CD4-positive, alpha-beta memory T cell (primary cell): ENCODE measurements at regions of chr13 and their contacts with region 1.

Region 1: DNA sequence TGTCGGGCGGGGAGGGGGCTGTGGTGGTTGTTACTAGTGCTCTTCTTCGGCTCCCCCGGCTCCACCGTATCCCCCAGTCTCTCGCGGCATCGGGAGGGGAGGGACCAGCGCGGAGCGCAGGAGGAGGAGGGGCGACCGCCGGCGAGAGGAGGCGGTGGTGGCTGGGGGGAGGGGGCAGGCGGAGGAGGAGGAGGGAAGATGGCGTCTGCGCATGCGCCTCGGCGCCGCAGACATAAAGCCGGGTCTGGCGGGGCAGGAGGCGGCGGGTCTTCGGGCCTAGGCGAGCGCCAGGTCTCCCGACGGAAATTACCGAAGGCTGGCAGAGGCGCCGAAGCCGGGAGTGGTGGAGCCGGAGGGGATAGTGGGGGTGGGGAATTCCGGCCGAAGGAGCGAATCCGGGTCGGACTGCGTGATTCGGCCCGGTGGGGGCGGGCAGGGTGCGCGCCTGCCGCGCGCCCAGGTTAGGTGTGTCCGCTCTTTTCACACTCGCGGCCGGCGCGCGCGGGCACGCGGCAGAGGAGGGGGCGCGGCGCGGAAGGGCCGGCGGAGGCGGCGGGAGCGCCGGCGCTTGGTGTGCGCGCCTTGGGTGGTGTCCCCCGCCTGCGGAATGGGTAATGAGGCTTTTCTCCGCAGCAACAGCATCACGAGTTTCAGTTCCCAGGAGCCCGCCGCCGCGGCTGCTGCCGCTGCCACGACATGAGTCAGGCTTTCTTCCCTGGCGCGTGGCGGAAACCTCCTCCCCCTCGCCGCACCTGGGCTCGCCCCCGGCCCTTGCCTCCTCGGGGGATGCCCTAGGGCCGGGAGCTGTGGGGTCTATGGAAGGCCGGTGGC is 1.3 kb upstream of the TSC22D1 start:
- DNase-seq: peak; percentile 93 to 96 (median 94)
- H3K4me3 ChIP-seq: peak overlapping the region; percentile 47 to 86
- H3K4me3 Mint-ChIP-seq: peak overlapping the region; percentile 88 to 97 (median 94)
- H3K27ac ChIP-seq: peak overlapping the region; percentile 84
- H3K27ac Mint-ChIP-seq: peak overlapping the region; percentile 91 to 97 (median 95)
- H3K4me1 ChIP-seq: peaks cover 39% of the 10 kb centered on the region
- H3K4me1 Mint-ChIP-seq: peaks cover 28 to 46% (median 38%) of the 10 kb centered on the region in 4 donors
- H3K27me3 ChIP-seq: no peaks in the 10 kb centered on the region
- H3K27me3 Mint-ChIP-seq: no peaks in the 10 kb centered on the region

Region 2: DNA sequence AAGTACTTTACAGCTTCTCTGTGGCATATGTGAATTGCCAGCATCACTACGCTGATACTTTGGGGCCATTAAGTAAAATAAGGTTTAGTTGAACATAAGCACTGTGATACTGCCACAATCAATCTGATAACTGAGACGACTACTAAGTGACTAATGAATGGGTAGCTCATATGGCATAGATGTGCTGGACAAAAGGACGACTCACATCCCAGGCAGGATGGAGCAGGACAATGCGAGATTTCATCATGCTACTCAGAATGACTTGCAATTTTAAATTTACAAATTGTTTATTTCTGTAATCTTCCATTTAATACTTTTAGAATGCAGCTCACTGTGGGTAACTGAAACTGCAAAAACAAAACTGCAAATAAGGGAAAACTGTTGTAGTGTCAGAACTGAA is 711.6 kb before region 1 on chr13:
- CTCF ChIA-PET with region 1: no interaction called
- POLR2A ChIA-PET with region 1: no interaction called
- intact Hi-C with region 1: no loop called
- DNase-seq: no peak
- H3K4me3 ChIP-seq: no peak overlapping the region
- H3K4me3 Mint-ChIP-seq: no peak overlapping the region
- H3K27ac ChIP-seq: no peak overlapping the region
- H3K27ac Mint-ChIP-seq: no peak overlapping the region
- H3K4me1 ChIP-seq: no peaks in the 10 kb centered on the region
- H3K4me1 Mint-ChIP-seq: no peaks in the 10 kb centered on the region
- H3K27me3 ChIP-seq: no peaks in the 10 kb centered on the region
- H3K27me3 Mint-ChIP-seq: no peaks in the 10 kb centered on the region

Region 3: DNA sequence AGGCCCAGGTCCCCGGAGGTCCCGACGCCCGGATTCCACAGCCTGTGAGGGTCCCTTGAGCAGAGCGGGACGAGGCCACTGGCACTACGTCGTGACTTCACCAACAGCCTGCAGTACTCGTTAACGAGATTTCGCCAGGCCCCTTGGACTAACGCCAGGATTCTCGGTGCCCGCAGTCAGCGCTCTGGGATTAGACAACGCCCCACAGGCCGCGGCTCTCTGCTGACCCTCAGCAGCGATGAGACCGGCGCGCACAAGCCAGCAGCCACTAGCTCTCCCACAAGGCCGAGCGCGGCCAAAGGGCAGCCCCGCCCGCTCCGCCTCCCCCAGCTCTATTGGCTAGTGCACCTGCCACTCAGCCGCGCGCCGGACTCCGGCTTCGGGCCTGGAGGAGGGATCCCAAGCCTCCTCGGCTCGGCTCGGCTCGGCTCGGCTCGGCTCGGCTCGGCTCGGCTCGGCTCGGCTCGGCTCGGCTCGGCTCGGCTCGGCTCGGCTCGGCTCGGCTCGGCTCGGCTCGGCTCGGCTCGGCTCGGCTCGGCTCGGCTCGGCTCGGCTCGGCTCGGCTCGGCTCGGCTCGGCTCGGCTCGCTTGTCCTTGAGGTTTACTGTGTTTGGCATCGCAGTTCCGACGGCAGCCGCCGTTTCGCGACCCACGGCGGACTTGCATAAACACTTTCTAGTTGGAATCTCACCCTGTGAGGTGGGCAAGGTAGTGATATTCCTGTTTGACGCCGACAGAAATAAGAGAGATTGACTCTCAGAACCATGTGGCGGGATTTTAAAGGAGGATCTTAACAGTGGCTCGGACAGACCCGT is 435.5 kb before region 1 on chr13:
- CTCF ChIA-PET with region 1: no interaction called
- POLR2A ChIA-PET with region 1: no interaction called
- intact Hi-C with region 1: loop called (anchors 2 kb)
- DNase-seq: peak; percentile 87 to 94 (median 89)
- H3K4me3 ChIP-seq: peak overlapping the region; percentile 59 to 79
- H3K4me3 Mint-ChIP-seq: peak overlapping the region; percentile 90 to 98 (median 94)
- H3K27ac ChIP-seq: peak overlapping the region; percentile 83
- H3K27ac Mint-ChIP-seq: peak overlapping the region; percentile 76 to 97 (median 96)
- H3K4me1 ChIP-seq: peaks cover 14% of the 10 kb centered on the region
- H3K4me1 Mint-ChIP-seq: peaks cover 9 to 16% (median 13%) of the 10 kb centered on the region in 4 donors
- H3K27me3 ChIP-seq: no peaks in the 10 kb centered on the region
- H3K27me3 Mint-ChIP-seq: peaks cover 5 to 7% of the 10 kb centered on the region in 2 donors

Region 4: GRCh38 chr13:44523146-44524015 is 54.1 kb before region 1 on chr13:
- CTCF ChIA-PET with region 1: no interaction called
- POLR2A ChIA-PET with region 1: no interaction called
- intact Hi-C with region 1: loop called (anchors 5 kb)
- DNase-seq: no peak
- H3K4me3 ChIP-seq: no peak overlapping the region
- H3K4me3 Mint-ChIP-seq: no peak overlapping the region
- H3K27ac ChIP-seq: no peak overlapping the region
- H3K27ac Mint-ChIP-seq: no peak overlapping the region
- H3K4me1 ChIP-seq: no peaks in the 10 kb centered on the region
- H3K4me1 Mint-ChIP-seq: peaks cover 0 to 6% (median 0%) of the 10 kb centered on the region in 4 donors
- H3K27me3 ChIP-seq: no peaks in the 10 kb centered on the region
- H3K27me3 Mint-ChIP-seq: no peaks in the 10 kb centered on the region

Region 5: GRCh38 chr13:44591316-44591715 is 13.9 kb after region 1 on chr13:
- CTCF ChIA-PET with region 1: no interaction called
- POLR2A ChIA-PET with region 1: no interaction called
- intact Hi-C with region 1: no loop called
- DNase-seq: no peak
- H3K4me3 ChIP-seq: no peak overlapping the region
- H3K4me3 Mint-ChIP-seq: no peak overlapping the region
- H3K27ac ChIP-seq: no peak overlapping the region
- H3K27ac Mint-ChIP-seq: no peak overlapping the region
- H3K4me1 ChIP-seq: no peaks in the 10 kb centered on the region
- H3K4me1 Mint-ChIP-seq: no peaks in the 10 kb centered on the region
- H3K27me3 ChIP-seq: no peaks in the 10 kb centered on the region
- H3K27me3 Mint-ChIP-seq: peaks cover 8 to 23% of the 10 kb centered on the region in 2 donors

Region 6: DNA sequence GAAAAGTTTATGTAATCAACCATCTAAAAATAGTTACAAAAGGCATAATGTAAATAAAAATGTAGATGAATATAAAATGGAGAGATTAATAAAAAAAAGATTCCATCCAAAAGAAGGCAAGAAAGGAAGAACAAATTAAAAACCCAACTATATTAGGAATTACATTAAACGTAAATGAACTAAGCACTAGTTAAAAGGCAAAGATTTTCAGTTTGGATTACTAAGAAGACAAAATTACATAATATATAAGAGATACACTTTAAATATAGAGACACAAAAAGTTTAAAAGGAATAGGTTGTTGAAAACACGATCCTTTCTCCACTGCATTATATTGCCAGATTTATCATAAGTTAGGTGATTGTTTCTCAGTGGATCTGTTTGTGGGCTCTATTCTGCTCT is 384.5 kb after region 1 on chr13:
- CTCF ChIA-PET with region 1: no interaction called
- POLR2A ChIA-PET with region 1: no interaction called
- intact Hi-C with region 1: no loop called
- DNase-seq: no peak
- H3K4me3 ChIP-seq: no peak overlapping the region
- H3K4me3 Mint-ChIP-seq: no peak overlapping the region
- H3K27ac ChIP-seq: no peak overlapping the region
- H3K27ac Mint-ChIP-seq: no peak overlapping the region
- H3K4me1 ChIP-seq: no peaks in the 10 kb centered on the region
- H3K4me1 Mint-ChIP-seq: peaks cover 0 to 1% (median under 1%) of the 10 kb centered on the region in 4 donors
- H3K27me3 ChIP-seq: no peaks in the 10 kb centered on the region
- H3K27me3 Mint-ChIP-seq: no peaks in the 10 kb centered on the region

Region 7: GRCh38 chr13:44988973-44989817 is 411.7 kb after region 1 on chr13 and contains the starts of genes GPALPP1 and NUFIP1:
- CTCF ChIA-PET with region 1: no interaction called
- POLR2A ChIA-PET with region 1: no interaction called
- intact Hi-C with region 1: loop called (anchors 1 kb)
- DNase-seq: peak; percentile 89 to 96 (median 89)
- H3K4me3 ChIP-seq: peak within 1 kb of the TSS; percentile 95 to 99
- H3K4me3 Mint-ChIP-seq: peak within 1 kb of the TSS; percentile 98 to 100 (median 99)
- H3K27ac ChIP-seq: peak within 1 kb of the TSS; percentile 87
- H3K27ac Mint-ChIP-seq: peak within 1 kb of the TSS; percentile 98 to 99 (median 99)
- H3K4me1 ChIP-seq: peaks cover 37% of the 10 kb centered on the region
- H3K4me1 Mint-ChIP-seq: peaks cover 47 to 72% (median 58%) of the 10 kb centered on the region in 4 donors
- H3K27me3 ChIP-seq: no peaks in the 10 kb centered on the region
- H3K27me3 Mint-ChIP-seq: no peaks in the 10 kb centered on the region
- total RNA-seq, gene GPALPP1: 33.0 to 35.1 TPM
- total RNA-seq, gene NUFIP1: 4.4 to 4.8 TPM

Region 8: GRCh38 chr13:45464687-45465453 is 887.4 kb after region 1 on chr13 and contains the start of gene COG3:
- CTCF ChIA-PET with region 1: no interaction called
- POLR2A ChIA-PET with region 1: interaction called, 3 read pairs
- intact Hi-C with region 1: loop called (anchors 5 kb)
- DNase-seq: peak; percentile 94 to 97 (median 97)
- H3K4me3 ChIP-seq: peak within 1 kb of the TSS; percentile 62 to 81
- H3K4me3 Mint-ChIP-seq: peak within 1 kb of the TSS; percentile 90 to 95 (median 92)
- H3K27ac ChIP-seq: peak within 1 kb of the TSS; percentile 98
- H3K27ac Mint-ChIP-seq: peak within 1 kb of the TSS; percentile 88 to 97 (median 94)
- H3K4me1 ChIP-seq: peaks cover 53% of the 10 kb centered on the region
- H3K4me1 Mint-ChIP-seq: peaks cover 36 to 65% (median 49%) of the 10 kb centered on the region in 4 donors
- H3K27me3 ChIP-seq: no peaks in the 10 kb centered on the region
- H3K27me3 Mint-ChIP-seq: no peaks in the 10 kb centered on the region
- total RNA-seq, gene COG3: 51.1 to 59.8 TPM

Region 9: DNA sequence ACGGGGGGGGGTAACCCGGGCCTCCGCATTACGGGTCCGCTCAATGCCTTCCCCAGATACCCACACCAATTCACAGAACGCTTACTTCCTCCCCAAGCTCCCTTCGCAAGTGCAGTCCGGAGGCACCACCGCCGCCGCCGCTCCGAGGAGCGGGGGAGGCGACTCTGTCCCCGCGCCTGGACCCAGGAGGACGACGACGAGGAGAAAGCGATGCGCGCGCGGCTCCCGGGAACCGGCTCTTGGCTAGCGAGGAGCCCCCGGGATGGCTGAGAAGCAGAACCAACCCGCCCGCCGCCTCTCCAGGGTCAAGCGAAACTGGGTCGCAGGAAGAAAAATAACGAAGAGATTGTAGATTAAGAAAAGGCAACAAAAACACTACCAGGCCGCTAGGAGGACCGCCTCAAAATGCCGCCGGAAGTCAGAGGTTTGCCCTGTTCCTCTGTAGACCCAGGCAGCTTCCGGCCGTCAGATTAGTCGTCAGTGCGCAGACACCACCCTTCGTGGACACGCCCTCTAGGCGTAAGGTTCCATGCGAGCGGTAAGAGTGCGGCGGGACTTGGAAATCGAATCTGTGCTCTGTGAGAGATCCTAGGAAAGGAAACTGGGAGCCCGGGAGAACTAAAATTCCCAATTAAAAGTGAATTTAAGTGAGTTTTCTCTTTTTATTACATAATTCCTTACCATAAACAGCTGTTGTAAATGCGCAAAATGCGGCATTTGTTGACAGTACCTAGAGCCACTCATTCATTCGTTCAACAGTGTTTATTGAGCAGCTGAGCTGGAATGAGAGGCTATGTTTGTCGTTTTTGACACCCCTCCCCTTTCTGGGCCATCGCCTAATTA is 1475.1 kb after region 1 on chr13 and contains the start of gene ZC3H13:
- CTCF ChIA-PET with region 1: no interaction called
- POLR2A ChIA-PET with region 1: no interaction called
- intact Hi-C with region 1: loop called (anchors 2 kb)
- DNase-seq: peak; percentile 91 to 97 (median 93)
- H3K4me3 ChIP-seq: peak within 1 kb of the TSS; percentile 59 to 88
- H3K4me3 Mint-ChIP-seq: peak within 1 kb of the TSS; percentile 88 to 99 (median 95)
- H3K27ac ChIP-seq: peak within 1 kb of the TSS; percentile 95
- H3K27ac Mint-ChIP-seq: peak within 1 kb of the TSS; percentile 93 to 99 (median 98)
- H3K4me1 ChIP-seq: peaks cover 38% of the 10 kb centered on the region
- H3K4me1 Mint-ChIP-seq: peaks cover 28 to 49% (median 37%) of the 10 kb centered on the region in 4 donors
- H3K27me3 ChIP-seq: peaks cover 4% of the 10 kb centered on the region
- H3K27me3 Mint-ChIP-seq: peaks cover 7 to 14% of the 10 kb centered on the region in 2 donors
- total RNA-seq, gene ZC3H13: 55.1 to 65.5 TPM